ENCODE measurements at regions of chr15 and their contacts with region 1.

Region 1: GRCh38 chr15:72554471-72555425 is 80.6 kb downstream of the ARIH1 start:
- DNase-seq: peak; percentile 54
- ATAC-seq: peak; percentile 78
- H3K4me3 Mint-ChIP-seq: no peak overlapping the region
- H3K27ac Mint-ChIP-seq: peak overlapping the region; percentile 79
- H3K4me1 Mint-ChIP-seq: peaks cover 21% of the 10 kb centered on the region
- H3K27me3 Mint-ChIP-seq: no peaks in the 10 kb centered on the region
- CTCF ChIP-seq: no peak

Region 2: GRCh38 chr15:72591361-72591760 is 36.6 kb after region 1 on chr15:
- CTCF ChIA-PET with region 1: no interaction called
- POLR2A ChIA-PET with region 1: no interaction called
- intact Hi-C with region 1: loop called (anchors 2 kb)
- DNase-seq: no peak
- ATAC-seq: no peak
- H3K4me3 Mint-ChIP-seq: no peak overlapping the region
- H3K27ac Mint-ChIP-seq: no peak overlapping the region
- H3K4me1 Mint-ChIP-seq: no peaks in the 10 kb centered on the region
- H3K27me3 Mint-ChIP-seq: no peaks in the 10 kb centered on the region
- CTCF ChIP-seq: no peak

Region 3: DNA sequence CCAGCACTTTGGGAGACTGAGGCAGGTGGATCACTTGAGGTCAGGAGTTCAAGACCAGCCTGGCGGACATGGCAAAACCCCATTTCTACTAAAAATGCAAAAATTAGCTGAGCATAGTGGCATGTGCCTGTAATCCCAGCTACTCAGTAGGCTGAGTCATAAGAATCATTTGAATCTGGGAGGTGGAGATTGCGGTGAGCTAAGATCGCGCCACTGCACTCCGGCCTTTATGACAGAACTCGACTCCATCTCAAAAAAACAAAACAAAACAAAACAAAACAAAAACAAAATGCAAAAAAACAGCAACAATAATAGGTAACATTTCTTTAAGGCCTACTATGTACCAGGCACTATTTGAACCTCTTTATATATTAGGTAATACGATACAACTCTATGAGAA is 149.9 kb after region 1 on chr15:
- CTCF ChIA-PET with region 1: no interaction called
- POLR2A ChIA-PET with region 1: no interaction called
- intact Hi-C with region 1: no loop called
- DNase-seq: no peak
- ATAC-seq: no peak
- H3K4me3 Mint-ChIP-seq: no peak overlapping the region
- H3K27ac Mint-ChIP-seq: no peak overlapping the region
- H3K4me1 Mint-ChIP-seq: peaks cover 2% of the 10 kb centered on the region
- H3K27me3 Mint-ChIP-seq: no peaks in the 10 kb centered on the region
- CTCF ChIP-seq: no peak